Heart right ventricle (tissue), 16 donors: ENCODE measurements at regions of chr5 and their contacts with region 1.

Region 1: DNA sequence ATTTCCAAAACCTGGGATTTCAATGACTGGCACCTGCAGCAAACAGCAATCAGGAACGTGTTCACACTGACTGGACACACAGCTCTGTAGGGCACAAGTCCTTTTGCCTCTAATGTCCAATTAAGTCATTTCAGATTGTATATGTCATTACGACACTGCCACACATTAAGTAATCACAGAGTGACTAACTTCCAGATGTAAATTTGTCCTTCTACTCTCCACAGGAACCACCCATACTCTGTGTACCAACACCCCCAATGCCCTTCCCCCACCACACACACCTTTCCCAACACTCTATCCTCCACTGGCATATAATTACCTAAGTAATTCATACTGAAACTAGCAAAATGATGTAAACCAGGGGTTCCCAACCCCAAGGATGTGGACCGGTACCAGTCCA is 30.5 kb downstream of the LARS1 start:
- DNase-seq: no peak
- ATAC-seq: no peak
- H3K4me3 ChIP-seq: no peak overlapping the region
- H3K27ac ChIP-seq: no peak overlapping the region
- H3K4me1 ChIP-seq: no peaks in the 10 kb centered on the region
- H3K27me3 ChIP-seq: no peaks in the 10 kb centered on the region
- CTCF ChIP-seq: no peak

Region 2: DNA sequence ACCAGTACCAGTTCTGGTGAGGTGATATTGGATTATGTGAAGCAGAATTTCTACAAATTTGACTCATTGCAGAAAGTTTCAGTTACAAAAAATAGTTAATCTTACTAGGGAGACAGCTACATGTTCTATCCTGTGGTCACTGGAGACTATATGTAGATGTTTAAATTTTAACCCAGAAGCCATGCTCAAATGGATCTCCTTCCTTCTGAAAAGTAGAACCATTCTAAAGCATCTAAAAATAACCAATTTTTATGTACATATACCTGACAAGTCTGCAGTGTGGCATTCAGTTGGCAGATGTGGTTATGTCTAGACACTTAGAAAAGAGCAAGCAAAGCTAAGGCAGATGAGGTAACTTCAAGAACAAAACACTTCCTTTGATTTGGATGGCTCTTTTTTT is 121.1 kb after region 1 on chr5:
- intact Hi-C with region 1: loop called in 3 of 10 experiments (anchors 10 kb)
- DNase-seq: no peak
- ATAC-seq: no peak
- H3K4me3 ChIP-seq: no peak overlapping the region
- H3K27ac ChIP-seq: no peak overlapping the region
- H3K4me1 ChIP-seq: no peaks in the 10 kb centered on the region
- H3K27me3 ChIP-seq: no peaks in the 10 kb centered on the region
- CTCF ChIP-seq: no peak

Region 3: DNA sequence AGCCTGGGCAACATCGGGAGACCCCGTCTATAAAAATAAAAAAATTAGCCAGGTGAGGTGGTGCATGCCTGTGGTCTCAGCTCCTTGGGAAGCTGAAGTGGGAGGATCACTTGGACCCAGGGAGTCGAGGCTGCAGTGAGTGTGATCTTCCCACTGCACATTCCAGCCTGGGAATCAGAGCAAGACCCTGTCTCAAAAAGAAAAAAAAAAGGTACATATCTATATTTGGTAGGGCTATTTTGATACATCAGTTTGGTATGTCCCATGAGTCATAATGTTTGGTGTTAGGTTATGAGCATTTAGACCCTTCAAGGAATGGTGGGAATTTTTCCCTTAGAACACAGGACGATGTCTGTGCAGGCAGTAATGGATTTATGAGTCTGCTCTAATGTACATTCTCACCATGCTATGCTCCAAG is 131.4 kb after region 1 on chr5:
- intact Hi-C with region 1: loop called in 1 of 10 experiments (anchors 10 kb)
- DNase-seq: no peak
- ATAC-seq: peak in 4 of 8 donors; percentile 35 to 70 (median 46)
- H3K4me3 ChIP-seq: no peak overlapping the region
- H3K27ac ChIP-seq: peak overlapping the region in 2 of 10 donors; percentile 12 to 44
- H3K4me1 ChIP-seq: peaks cover 0 to 11% (median 0%) of the 10 kb centered on the region in 9 donors
- H3K27me3 ChIP-seq: no peaks in the 10 kb centered on the region
- CTCF ChIP-seq: no peak

Region 4: GRCh38 chr5:146765089-146765832 is 613.3 kb after region 1 on chr5:
- intact Hi-C with region 1: no loop called
- DNase-seq: no peak
- ATAC-seq: no peak
- H3K4me3 ChIP-seq: no peak overlapping the region
- H3K27ac ChIP-seq: no peak overlapping the region
- H3K4me1 ChIP-seq: no peaks in the 10 kb centered on the region
- H3K27me3 ChIP-seq: peaks cover 0 to 5% (median 0%) of the 10 kb centered on the region in 7 donors
- CTCF ChIP-seq: no peak